ENCODE measurements at regions of chr2 and their contacts with region 1.

Region 1: GRCh38 chr2:177429688-177430325 is 37.2 kb downstream of the AGPS start:
- DNase-seq: peak; percentile 63
- H3K4me3 ChIP-seq: no peak overlapping the region
- H3K27me3 ChIP-seq: no peaks in the 10 kb centered on the region
- CTCF ChIP-seq: no peak

Region 2: GRCh38 chr2:177419274-177419673 is 10.5 kb before region 1 on chr2:
- CTCF ChIA-PET with region 1: interaction called, 10 read pairs
- POLR2A ChIA-PET with region 1: no interaction called
- DNase-seq: no peak
- H3K4me3 ChIP-seq: no peak overlapping the region
- H3K27me3 ChIP-seq: no peaks in the 10 kb centered on the region
- CTCF ChIP-seq: no peak

Region 3: GRCh38 chr2:177651833-177652232 is 222.0 kb after region 1 on chr2:
- CTCF ChIA-PET with region 1: no interaction called
- POLR2A ChIA-PET with region 1: no interaction called
- DNase-seq: no peak
- H3K4me3 ChIP-seq: no peak overlapping the region
- H3K27me3 ChIP-seq: peaks cover 2% of the 10 kb centered on the region; the same call in 1 of the 2 replicates
- CTCF ChIP-seq: no peak